ENCODE measurements at regions of chr12 and their contacts with region 1.

Region 1: DNA sequence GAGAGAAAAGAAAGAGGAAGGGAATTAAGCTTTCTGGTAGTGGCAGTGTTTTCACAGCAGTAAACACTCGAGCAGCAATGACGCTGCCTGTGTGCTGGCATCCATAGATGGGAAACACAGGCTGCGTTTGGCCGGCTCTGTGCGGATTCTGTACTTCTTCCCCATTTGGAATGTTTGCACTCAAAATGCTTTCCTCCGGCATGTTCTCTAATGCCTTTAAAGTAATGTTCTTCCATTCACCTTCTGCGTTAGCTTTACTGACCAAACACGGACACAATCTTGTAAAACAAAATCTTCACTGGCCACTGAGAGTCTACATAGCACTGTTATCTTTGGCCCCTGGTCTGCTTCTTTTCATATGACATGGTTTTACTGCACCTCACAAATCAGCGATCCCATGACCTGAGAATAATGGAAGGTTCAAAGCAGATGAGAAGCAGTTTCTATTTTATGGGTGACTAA is 31.4 kb downstream of the DCP1B start:
- DNase-seq: peak; percentile 95
- H3K4me3 ChIP-seq: peak overlapping the region in 3 of 4 donors; percentile 13 to 19 (median 18)
- H3K27ac ChIP-seq: peak overlapping the region; percentile 85 to 94 (median 86)
- H3K4me1 ChIP-seq: peaks cover 0 to 95% (median 86%) of the 10 kb centered on the region in 4 donors
- H3K27me3 ChIP-seq: no peaks in the 10 kb centered on the region
- CTCF ChIP-seq: no peak
- EP300 ChIP-seq: peak; percentile 95 to 98 (median 96)
- POLR2A ChIP-seq: no peak

Region 2: DNA sequence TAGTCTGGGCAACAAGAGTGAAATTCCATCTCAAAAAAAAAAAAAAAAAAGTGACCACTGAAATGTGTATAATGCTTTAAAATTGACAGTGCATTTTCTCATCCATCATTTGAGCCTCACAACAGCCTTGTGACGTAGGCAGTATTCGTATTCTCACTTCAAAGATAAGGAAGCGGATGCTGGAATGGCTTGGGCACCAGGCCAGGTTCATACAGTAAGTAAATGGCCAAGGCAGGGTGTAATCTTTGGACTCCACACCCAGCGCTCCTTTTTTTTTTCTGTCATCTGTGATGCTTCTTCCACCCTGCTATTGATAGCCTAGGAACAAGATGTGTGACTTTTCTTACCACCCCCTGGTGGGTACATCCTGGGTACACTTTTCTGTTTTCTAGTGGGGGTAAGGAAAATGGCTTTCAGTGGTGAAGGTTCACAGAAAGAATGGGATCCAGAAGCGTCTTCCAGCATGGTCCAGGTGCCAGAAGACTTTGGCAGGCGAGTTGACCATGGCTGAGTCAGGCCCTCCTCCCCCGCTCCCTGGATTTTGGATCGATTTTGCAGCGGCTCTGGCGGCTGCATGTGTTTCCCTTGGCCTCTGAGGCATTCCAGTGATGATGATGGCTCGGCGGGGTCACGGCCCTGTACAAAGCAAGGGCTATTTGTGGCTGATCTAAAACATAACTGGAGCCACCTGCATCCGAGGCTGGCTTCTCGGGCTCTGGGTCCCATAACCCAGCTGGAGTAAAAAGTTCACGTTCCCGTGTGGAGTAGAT is 190.5 kb after region 1 on chr12:
- intact Hi-C with region 1: loop called (anchors 10 kb)
- DNase-seq: peak; percentile 95
- H3K4me3 ChIP-seq: no peak overlapping the region
- H3K27ac ChIP-seq: peak overlapping the region; percentile 76 to 89 (median 80)
- H3K4me1 ChIP-seq: peaks cover 0 to 85% (median 73%) of the 10 kb centered on the region in 4 donors
- H3K27me3 ChIP-seq: no peaks in the 10 kb centered on the region
- CTCF ChIP-seq: no peak
- EP300 ChIP-seq: no peak
- POLR2A ChIP-seq: no peak